ENCODE measurements at regions of chr6 and their contacts with region 1.

Region 1: DNA sequence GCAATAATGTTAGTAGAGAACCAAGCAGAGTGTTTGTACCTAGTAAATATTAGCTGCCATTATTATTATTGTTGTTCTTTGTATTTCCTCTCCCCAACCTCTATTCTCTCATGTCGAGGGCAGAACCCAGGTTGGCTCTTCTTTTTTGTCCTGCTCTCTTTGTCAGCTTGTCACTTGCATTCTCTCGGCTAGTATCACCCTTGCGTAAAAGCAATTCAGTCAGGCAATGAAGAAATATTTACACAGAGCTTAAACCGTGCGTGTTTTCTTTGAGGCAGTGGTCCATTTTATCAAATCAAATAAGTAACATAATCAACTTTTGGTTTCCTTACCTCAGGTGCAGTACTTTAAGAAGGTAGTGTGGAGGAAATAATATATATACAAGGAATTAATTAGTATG is 83.9 kb downstream of the TULP4 start:
- DNase-seq: no peak
- ATAC-seq: no peak
- H3K4me3 Mint-ChIP-seq: no peak overlapping the region
- H3K27ac Mint-ChIP-seq: no peak overlapping the region
- H3K4me1 Mint-ChIP-seq: peaks cover 10% of the 10 kb centered on the region
- H3K27me3 Mint-ChIP-seq: no peaks in the 10 kb centered on the region
- CTCF ChIP-seq: no peak

Region 2: DNA sequence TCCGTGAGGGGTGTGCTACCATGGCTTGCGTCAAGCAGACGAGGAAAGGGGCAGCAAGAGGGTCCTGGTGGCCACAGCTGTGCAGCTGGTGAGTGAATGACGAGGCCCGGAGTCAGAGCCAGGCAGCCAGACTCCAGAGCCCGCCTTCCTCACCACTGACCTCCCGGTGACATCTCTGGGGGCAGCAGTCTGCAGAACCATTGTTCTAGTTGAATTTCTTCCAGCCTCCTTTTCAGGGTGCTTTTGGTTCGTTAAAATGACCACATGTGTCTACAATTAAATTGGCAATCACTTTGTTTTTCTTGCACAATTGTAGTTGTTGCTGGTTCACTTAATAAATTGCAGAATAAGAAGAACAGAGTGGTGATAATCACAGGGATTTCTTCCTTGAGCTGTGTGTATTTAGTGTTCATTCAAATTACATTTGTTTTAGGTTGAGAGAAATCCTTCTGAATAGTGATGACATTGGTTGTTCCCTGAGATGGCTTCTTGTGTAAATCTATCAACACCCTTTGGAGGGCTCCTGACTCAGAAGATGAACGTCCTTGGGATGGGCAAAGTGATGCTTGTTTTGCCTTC is 12.5 kb after region 1 on chr6:
- CTCF ChIA-PET with region 1: no interaction called
- POLR2A ChIA-PET with region 1: no interaction called
- intact Hi-C with region 1: no loop called
- DNase-seq: no peak
- ATAC-seq: no peak
- H3K4me3 Mint-ChIP-seq: no peak overlapping the region
- H3K27ac Mint-ChIP-seq: no peak overlapping the region
- H3K4me1 Mint-ChIP-seq: peaks cover 6% of the 10 kb centered on the region
- H3K27me3 Mint-ChIP-seq: no peaks in the 10 kb centered on the region
- CTCF ChIP-seq: no peak

Region 3: DNA sequence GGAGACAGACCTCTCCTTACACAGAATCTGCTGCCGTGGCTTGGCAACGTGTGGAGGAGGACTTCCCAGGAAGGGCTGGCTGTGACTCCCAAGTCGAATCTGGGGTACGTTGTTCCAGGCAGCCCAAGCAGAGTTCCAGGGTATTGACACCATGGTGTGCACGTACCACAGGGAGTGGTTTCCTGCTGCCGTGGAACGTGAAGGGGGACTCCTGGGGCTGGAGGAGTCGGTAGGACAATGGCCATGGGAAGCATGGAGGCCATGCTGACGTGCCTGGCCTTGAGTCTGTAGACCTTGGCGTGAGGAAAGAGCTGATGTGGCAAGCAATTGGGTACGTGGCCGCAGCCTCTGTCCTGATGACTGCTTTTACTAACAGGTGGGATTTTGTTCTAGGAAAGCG is 35.4 kb after region 1 on chr6:
- CTCF ChIA-PET with region 1: no interaction called
- POLR2A ChIA-PET with region 1: no interaction called
- intact Hi-C with region 1: no loop called
- DNase-seq: no peak
- ATAC-seq: no peak
- H3K4me3 Mint-ChIP-seq: no peak overlapping the region
- H3K27ac Mint-ChIP-seq: no peak overlapping the region
- H3K4me1 Mint-ChIP-seq: no peaks in the 10 kb centered on the region
- H3K27me3 Mint-ChIP-seq: no peaks in the 10 kb centered on the region
- CTCF ChIP-seq: no peak

Region 4: GRCh38 chr6:158752613-158753012 is 356.5 kb after region 1 on chr6:
- CTCF ChIA-PET with region 1: no interaction called
- POLR2A ChIA-PET with region 1: interaction called, 14 read pairs
- intact Hi-C with region 1: no loop called
- DNase-seq: no peak
- ATAC-seq: peak; percentile 47
- H3K4me3 Mint-ChIP-seq: no peak overlapping the region
- H3K27ac Mint-ChIP-seq: no peak overlapping the region
- H3K4me1 Mint-ChIP-seq: peaks cover 7% of the 10 kb centered on the region
- H3K27me3 Mint-ChIP-seq: no peaks in the 10 kb centered on the region
- CTCF ChIP-seq: no peak

Measured in activated B cell treated with CpG ODN at 0.5 μM for 24 hours (primary cell).